ENCODE measurements at regions of chr1 and their contacts with region 1.

Region 1: DNA sequence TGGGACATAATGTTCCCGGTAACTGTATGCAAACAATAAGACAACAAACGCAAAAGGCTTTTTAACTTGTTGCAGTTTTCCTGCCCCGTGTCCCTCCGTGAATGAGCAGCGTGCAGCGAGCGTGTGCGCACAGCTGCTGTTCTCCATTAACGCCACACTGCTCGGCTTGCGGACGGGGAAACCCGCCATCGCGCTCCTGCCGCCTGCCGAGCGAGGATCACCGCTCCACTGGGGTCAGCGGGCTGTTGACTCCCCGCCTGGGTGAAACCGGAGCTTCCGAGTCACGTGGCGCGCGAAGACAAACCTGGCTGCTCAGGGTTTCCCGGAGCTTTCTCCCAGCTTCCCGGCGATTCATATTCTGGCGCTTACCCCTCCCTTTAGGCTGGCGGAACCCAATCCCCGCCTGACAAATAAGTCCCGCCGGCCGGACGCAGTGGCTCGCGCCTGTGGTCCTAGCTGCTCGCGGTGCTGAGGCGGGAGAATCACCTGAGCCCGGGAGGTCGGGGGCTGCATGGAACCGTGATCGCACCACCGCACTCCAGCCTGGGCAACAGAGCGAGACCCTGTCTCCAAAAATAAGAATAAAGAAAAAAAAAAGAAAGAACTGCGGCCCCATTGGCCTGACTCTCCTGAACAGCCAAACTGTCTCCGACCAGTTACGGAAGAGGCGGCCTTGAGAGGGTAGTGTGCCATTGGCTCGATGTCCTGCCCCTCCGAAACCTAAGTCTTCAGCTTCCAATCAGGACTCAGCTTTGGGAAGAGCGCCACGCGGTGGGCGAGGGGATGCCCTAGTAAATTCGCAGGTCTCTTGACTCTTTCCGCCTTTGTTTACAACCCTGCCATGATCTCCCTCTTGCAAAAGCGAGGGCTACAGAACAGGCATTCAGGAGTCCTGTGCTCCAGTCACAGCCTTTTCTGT is at the start of gene CREB3L4:
- DNase-seq: peak; percentile 98
- ATAC-seq: peak; percentile 83
- H3K4me3 ChIP-seq: peak within 1 kb of the TSS; percentile 59
- H3K27ac ChIP-seq: peak within 1 kb of the TSS; percentile 77
- H3K4me1 ChIP-seq: peaks cover 3% of the 10 kb centered on the region; the same call in 1 of the 2 replicates
- H3K27me3 ChIP-seq: no peaks in the 10 kb centered on the region
- CTCF ChIP-seq: peak; percentile 60
- POLR2A ChIP-seq: peak; percentile 66; the same call in 1 of the 2 replicates
- RAD21 ChIP-seq: peak; percentile 19; the same call in 1 of the 2 replicates
- total RNA-seq, gene CREB3L4: 4.4 and 6.5 TPM in 2 replicates

Region 2: DNA sequence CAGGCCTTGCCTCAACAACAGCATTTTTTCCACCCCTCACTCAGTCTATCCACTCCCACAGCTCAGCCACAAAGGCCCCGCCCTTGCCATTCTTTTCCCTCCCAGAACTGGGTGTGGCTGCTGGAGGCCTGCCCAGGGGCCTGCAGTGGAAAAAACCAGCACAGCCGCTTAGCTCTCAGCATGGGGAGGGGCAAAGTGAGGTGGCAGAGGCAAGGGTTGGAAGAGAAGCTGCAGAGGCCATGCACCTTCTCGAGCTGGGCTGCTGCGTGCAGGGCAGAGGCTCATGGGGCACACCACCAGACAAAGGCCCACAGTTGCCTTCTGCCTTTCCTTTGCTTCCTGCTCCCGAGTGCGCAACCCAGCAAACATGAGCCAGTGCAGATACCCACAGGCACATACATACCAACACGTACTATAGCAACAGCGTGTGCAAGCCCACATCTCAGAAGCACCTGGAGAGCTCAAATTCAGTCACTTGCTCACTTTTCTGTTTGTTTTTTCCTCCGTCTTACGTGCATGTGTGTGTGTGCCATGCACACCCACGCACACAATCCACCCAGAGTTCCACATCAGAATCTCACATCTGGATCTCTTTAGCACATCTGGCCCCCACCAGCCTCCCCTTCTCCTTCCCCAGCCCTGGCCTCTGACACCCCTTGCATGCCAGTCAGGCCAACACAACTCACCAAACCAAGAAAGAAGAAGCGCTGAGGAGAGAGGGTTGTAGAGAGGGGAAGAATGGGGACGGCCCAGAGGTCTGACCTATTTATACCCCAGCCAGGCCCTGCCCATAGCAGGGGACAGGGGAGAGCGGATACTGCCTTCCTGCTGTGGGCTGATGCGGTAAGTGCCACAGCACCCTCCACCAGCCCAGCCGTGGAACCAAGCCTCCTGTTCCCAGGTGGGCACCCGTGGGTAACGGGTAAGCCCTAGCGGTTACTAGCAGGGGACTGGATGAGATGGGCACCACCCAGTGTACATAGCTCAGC is 422.0 kb before region 1 on chr1 and contains the start of gene S100A4:
- CTCF ChIA-PET with region 1: no interaction called
- POLR2A ChIA-PET with region 1: no interaction called
- dilution Hi-C with region 1: no loop called
- in situ Hi-C with region 1: loop called (anchors 25 kb)
- intact Hi-C with region 1: no loop called
- DNase-seq: peak; percentile 83
- ATAC-seq: peak; percentile 79
- H3K4me3 ChIP-seq: no peak within 1 kb of the TSS
- H3K27ac ChIP-seq: peak within 1 kb of the TSS; percentile 81
- H3K4me1 ChIP-seq: peaks cover 40% of the 10 kb centered on the region
- H3K27me3 ChIP-seq: no peaks in the 10 kb centered on the region
- CTCF ChIP-seq: no peak
- POLR2A ChIP-seq: no peak
- RAD21 ChIP-seq: no peak
- total RNA-seq, gene S100A4: 5.6 and 7.5 TPM in 2 replicates

Region 3: DNA sequence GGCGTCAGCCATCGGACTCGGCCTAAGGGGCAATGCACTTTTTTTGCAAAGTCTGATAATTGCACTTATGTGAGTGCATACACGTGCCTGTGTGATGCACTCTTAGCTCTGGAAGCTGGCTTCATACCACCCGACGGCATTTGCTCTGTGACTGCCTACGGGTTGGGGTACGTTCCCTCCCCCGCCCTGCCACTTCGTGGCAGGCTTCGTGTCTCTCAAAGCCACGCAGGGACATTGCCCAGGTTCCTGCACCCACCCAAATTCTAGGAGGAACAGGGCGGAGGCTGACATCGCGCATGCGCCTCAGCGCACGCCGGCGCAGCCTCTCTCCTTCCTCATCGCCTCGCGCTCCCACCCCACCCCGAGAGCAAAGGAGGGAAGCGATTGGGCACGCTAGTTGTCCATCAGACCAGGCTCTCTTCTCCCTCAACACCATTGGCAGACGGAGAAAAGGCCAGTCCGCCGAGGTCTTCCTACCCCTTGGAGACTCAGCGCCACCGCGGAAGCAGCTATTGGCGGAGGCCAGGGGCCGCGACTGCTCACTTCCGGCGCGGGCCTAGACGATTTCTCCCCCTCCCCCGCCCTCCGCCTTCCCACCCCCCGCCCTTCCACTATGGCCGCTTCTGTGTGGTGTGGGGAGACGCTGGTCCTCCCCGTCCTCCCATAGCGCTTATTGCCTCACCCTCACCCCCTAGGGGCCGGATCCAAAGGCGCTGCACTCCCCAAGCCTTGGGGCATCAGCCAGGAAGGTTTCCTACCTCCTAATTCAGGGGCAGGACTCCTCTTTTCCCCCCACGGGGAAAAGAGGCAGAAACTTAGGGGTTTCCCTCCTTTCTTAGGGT is 239.7 kb before region 1 on chr1 and contains the start of gene INTS3:
- CTCF ChIA-PET with region 1: no interaction called
- POLR2A ChIA-PET with region 1: no interaction called
- dilution Hi-C with region 1: no loop called
- in situ Hi-C with region 1: no loop called
- intact Hi-C with region 1: no loop called
- DNase-seq: peak; percentile 100
- ATAC-seq: peak; percentile 100
- H3K4me3 ChIP-seq: peak within 1 kb of the TSS; percentile 74
- H3K27ac ChIP-seq: peak within 1 kb of the TSS; percentile 95
- H3K4me1 ChIP-seq: peaks cover 3% of the 10 kb centered on the region; the same call in 1 of the 2 replicates
- H3K27me3 ChIP-seq: no peaks in the 10 kb centered on the region
- CTCF ChIP-seq: no peak
- POLR2A ChIP-seq: peak; percentile 52; the same call in 1 of the 2 replicates
- RAD21 ChIP-seq: no peak
- total RNA-seq, gene INTS3: 28.1 and 33.5 TPM in 2 replicates